MCF 10A (cell line): ENCODE measurements at regions of chr1 and their contacts with region 1.

Region 1: GRCh38 chr1:26811057-26811456 is 15.4 kb upstream of the ZDHHC18 start:
- DNase-seq: no peak
- H3K4me3 Mint-ChIP-seq: no peak overlapping the region
- H3K27ac Mint-ChIP-seq: peak overlapping the region; percentile 39
- H3K4me1 Mint-ChIP-seq: peaks cover 6% of the 10 kb centered on the region
- H3K27me3 Mint-ChIP-seq: no peaks in the 10 kb centered on the region
- CTCF ChIP-seq: no peak

Region 2: DNA sequence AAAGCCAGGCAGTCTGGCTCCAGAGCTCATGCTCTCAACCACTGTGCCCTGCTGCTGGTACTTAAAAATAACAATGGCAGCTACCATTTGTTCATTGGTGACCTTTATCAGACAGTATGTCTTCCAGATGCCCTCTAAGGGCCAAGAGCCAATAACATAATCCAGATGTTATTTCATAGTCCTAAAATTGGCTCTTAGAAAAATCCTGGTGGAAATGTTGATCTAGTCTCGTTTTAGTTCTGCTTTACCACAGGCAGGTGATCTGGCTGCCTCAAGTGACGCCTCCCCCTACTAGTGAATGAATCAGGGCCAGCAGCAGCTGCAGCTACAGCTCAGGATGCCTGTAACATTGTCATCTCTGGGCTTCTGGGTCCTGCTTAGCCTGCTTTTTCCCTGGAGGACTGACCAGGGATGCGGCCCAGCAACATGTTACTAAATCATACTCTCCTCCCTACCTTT is 351.5 kb before region 1 on chr1:
- CTCF ChIA-PET with region 1: no interaction called
- POLR2A ChIA-PET with region 1: no interaction called
- intact Hi-C with region 1: no loop called
- DNase-seq: no peak
- H3K4me3 Mint-ChIP-seq: no peak overlapping the region
- H3K27ac Mint-ChIP-seq: no peak overlapping the region
- H3K4me1 Mint-ChIP-seq: no peaks in the 10 kb centered on the region
- H3K27me3 Mint-ChIP-seq: no peaks in the 10 kb centered on the region
- CTCF ChIP-seq: no peak

Region 3: DNA sequence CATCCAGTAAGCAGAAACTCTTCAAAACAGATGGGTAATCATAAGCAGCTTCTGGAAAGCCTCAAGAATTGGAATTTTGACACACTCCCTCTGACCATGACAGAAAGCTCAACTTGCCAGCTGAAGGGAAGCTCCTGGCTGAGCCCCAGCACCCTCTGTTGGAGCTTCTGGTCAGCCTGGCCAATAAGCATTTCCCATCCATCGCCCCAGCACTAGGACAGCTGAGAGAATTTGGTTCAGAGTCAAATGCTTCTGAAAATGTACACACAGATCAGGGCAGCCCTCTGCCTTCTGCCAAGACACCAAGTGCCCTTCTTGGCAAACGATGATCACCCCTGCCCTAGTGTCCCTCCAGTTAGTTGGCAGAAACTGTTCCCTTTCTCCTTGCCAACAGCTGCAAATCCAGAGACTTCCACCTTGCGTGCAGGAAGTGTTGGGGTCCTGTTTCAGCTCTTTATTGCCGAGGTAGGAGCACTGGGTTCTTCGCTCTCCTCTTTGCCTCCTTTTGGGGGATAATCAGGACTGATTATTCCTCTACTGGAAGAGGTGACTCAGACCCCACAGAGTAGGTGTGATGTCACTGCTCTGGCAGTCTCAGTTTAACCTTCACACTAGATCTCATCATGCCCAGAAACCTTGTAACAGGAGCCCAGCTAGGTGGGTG is 11.4 kb before region 1 on chr1:
- CTCF ChIA-PET with region 1: interaction called, 20 read pairs
- POLR2A ChIA-PET with region 1: interaction called, 3 read pairs
- intact Hi-C with region 1: no loop called
- DNase-seq: peak; percentile 70
- H3K4me3 Mint-ChIP-seq: no peak overlapping the region
- H3K27ac Mint-ChIP-seq: no peak overlapping the region
- H3K4me1 Mint-ChIP-seq: peaks cover 11% of the 10 kb centered on the region
- H3K27me3 Mint-ChIP-seq: no peaks in the 10 kb centered on the region
- CTCF ChIP-seq: no peak

Region 4: GRCh38 chr1:26826261-26827105 is 15.4 kb after region 1 on chr1 and contains the start of gene ZDHHC18:
- CTCF ChIA-PET with region 1: interaction called, 15 read pairs
- POLR2A ChIA-PET with region 1: interaction called, 4 read pairs
- intact Hi-C with region 1: no loop called
- DNase-seq: peak; percentile 56
- H3K4me3 Mint-ChIP-seq: peak within 1 kb of the TSS; percentile 83
- H3K27ac Mint-ChIP-seq: peak within 1 kb of the TSS; percentile 86
- H3K4me1 Mint-ChIP-seq: peaks cover 20% of the 10 kb centered on the region
- H3K27me3 Mint-ChIP-seq: no peaks in the 10 kb centered on the region
- CTCF ChIP-seq: peak; percentile 69
- total RNA-seq, gene ZDHHC18: 14.0 and 15.5 TPM in 2 replicates

Region 5: DNA sequence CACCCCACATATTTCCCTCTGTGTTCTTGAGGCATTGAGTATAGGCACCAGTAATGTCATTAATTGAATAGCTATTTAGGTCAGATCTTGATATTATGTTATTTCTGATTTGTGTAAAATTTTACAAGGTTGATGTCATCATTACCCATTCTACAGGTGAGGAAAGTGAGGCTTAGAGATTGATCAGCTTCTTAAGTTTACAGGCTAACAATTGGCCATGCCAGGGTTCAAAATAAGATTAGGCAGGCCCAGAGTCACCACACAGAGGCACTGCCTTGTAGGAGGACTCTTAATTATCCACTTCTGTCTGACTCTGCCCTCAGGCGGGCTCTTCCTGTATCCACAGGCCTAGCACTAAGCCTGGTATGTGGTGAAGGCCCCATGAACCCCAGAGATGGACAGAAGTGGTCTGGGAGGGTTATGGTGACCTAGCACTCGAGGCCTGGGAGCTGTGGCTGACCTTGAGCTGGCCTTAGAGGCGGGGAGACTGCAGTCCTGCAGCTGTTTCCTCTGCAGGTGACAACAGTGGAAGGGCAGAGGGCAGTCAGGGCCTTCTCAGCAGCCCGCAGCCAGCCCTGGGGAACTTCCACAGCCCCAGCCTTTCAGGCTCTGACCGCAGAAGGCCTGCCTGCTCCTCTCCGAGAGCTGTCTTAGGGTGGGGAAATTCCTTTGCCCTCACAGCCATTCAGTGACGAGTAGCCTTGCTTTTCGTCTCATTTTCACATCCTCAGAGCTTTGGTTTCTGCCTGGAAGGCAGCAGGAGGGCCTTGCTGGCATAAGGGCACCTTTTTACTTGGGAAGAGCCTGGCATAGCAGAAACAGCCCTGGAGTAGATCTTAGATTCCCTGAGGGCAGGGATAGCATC is 27.6 kb after region 1 on chr1:
- CTCF ChIA-PET with region 1: interaction called, 14 read pairs
- POLR2A ChIA-PET with region 1: no interaction called
- intact Hi-C with region 1: no loop called
- DNase-seq: no peak
- H3K4me3 Mint-ChIP-seq: no peak overlapping the region
- H3K27ac Mint-ChIP-seq: no peak overlapping the region
- H3K4me1 Mint-ChIP-seq: no peaks in the 10 kb centered on the region
- H3K27me3 Mint-ChIP-seq: no peaks in the 10 kb centered on the region
- CTCF ChIP-seq: no peak

Region 6: DNA sequence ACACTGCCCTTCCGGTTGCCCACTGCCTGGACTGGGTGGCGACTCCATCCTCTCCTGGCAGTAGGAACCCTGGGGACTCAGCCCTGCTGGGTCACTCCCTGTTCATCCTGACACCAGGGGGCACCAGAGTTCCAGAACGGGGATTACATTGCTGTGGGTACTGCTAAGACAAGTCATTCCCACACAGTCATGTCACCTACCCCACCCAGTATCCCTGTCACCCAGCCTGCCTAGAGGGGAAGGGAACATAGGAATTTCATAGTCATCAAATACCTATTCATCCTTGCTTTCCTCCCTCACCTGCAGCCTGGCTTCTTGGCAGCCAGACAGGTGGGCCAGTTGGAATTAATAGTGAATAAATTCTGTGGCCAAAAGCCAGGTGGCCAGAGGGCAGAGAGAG is 42.1 kb after region 1 on chr1:
- CTCF ChIA-PET with region 1: interaction called, 11 read pairs
- POLR2A ChIA-PET with region 1: interaction called, 4 read pairs
- intact Hi-C with region 1: no loop called
- DNase-seq: peak; percentile 94
- H3K4me3 Mint-ChIP-seq: no peak overlapping the region
- H3K27ac Mint-ChIP-seq: no peak overlapping the region
- H3K4me1 Mint-ChIP-seq: peaks cover 30% of the 10 kb centered on the region
- H3K27me3 Mint-ChIP-seq: no peaks in the 10 kb centered on the region
- CTCF ChIP-seq: peak; percentile 81

Region 7: GRCh38 chr1:26874896-26875295 is 63.8 kb after region 1 on chr1:
- CTCF ChIA-PET with region 1: interaction called, 24 read pairs
- POLR2A ChIA-PET with region 1: interaction called, 9 read pairs
- intact Hi-C with region 1: no loop called
- DNase-seq: no peak
- H3K4me3 Mint-ChIP-seq: no peak overlapping the region
- H3K27ac Mint-ChIP-seq: peak overlapping the region; percentile 40
- H3K4me1 Mint-ChIP-seq: no peaks in the 10 kb centered on the region
- H3K27me3 Mint-ChIP-seq: no peaks in the 10 kb centered on the region
- CTCF ChIP-seq: no peak

Region 8: DNA sequence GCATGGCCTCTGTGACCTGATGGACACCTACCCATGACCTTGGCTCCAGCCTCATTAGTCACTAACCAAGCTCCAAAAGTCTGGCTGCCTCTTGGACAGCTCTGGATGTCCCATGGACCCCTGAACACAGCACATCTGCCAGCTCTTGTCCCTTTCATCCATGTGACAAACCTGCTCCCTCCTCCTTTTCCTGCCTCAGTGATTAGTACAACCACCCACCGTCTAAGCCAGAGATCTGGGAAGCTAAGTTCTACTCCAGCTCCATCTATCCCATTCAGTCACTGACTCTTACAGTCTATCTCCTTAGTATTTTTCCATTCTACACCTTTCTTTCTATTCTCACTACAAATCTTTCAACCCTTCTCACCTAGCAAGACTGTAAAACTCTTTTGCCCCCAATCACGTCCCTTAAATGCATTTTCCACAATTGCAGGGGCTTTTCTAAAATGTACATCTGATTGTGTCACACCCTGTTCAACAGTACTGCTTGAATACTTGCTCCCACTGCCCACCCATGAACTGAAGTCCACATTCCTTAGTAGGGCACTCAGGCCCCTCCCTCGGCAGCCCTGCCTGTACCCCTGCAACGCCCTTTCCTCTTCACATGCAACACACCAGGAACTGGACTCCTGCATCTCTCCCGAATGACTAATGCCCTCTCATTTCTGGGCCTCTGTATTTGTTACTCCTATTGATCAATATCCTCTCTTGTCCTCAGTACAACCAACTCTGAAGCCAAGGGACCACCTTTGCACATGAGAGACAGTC is 71.8 kb after region 1 on chr1:
- CTCF ChIA-PET with region 1: interaction called, 24 read pairs
- POLR2A ChIA-PET with region 1: no interaction called
- intact Hi-C with region 1: no loop called
- DNase-seq: no peak
- H3K4me3 Mint-ChIP-seq: no peak overlapping the region
- H3K27ac Mint-ChIP-seq: no peak overlapping the region
- H3K4me1 Mint-ChIP-seq: no peaks in the 10 kb centered on the region
- H3K27me3 Mint-ChIP-seq: no peaks in the 10 kb centered on the region
- CTCF ChIP-seq: no peak